HEK293T (cell line): ENCODE measurements at regions of chr1 and their contacts with region 1.

Region 1: GRCh38 chr1:228486596-228487335 is 416 bp upstream of the RNF187 start:
- DNase-seq: peak; percentile 96

Region 2: GRCh38 chr1:228434686-228435085 is 52.1 kb before region 1 on chr1:
- CTCF ChIA-PET with region 1: no interaction called
- POLR2A ChIA-PET with region 1: no interaction called
- DNase-seq: no peak

Region 3: DNA sequence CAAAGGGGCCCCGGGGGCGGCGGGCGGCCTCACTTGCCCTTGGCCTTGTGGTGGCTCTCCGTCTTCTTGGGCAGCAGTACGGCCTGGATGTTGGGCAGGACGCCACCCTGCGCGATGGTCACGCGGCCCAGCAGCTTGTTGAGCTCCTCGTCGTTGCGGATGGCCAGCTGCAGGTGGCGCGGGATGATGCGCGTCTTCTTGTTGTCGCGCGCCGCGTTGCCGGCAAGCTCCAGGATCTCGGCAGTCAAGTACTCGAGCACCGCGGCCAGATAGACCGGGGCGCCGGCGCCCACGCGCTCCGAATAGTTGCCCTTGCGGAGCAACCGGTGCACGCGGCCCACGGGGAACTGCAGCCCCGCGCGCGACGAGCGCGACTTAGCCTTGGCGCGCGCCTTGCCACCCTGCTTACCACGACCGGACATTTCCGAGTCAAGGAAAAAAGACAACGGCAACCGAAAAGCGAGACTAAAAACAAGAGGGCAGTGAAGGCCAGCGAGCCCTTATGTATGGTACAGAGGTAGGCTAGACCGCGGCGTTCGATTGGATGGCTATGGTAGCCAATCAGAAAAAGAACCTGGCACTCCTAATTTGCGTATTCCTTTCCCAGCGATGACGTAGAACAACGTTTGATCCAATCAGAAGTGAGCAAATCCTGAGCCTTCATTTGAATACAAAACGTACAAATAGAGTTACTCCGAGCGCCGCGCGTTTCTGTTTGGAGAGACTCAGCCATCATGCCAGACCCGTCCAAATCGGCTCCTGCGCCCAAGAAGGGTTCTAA is 29.2 kb before region 1 on chr1:
- CTCF ChIA-PET with region 1: interaction called, 12 read pairs
- POLR2A ChIA-PET with region 1: interaction called, 38 read pairs
- DNase-seq: peak; percentile 98

Region 4: DNA sequence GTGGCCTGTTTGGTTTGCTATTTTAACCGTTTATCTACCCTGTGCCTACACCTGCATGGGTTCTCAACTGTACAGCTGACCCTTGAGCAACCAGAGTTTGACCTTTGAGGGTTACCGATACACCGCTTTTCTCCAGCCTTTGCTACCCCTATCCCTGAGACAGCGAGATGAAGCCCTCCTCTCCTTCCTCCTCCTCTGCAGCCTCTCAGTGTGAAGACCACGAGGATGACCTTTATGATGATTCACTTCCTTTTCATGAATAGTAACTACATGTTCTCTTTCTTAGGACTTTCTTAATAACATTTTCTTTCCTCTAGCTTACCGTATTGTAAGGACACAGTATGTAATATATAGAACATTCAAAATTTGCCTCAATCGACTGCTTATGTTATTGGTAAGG is 14.1 kb before region 1 on chr1:
- CTCF ChIA-PET with region 1: interaction called, 6 read pairs
- POLR2A ChIA-PET with region 1: interaction called, 10 read pairs
- DNase-seq: no peak

Region 5: GRCh38 chr1:228517655-228518054 is 30.9 kb after region 1 on chr1:
- CTCF ChIA-PET with region 1: no interaction called
- POLR2A ChIA-PET with region 1: no interaction called
- DNase-seq: no peak